Naive thymus-derived CD4-positive, alpha-beta T cell (primary cell): ENCODE measurements at regions of chr12 and their contacts with region 1.

Region 1: DNA sequence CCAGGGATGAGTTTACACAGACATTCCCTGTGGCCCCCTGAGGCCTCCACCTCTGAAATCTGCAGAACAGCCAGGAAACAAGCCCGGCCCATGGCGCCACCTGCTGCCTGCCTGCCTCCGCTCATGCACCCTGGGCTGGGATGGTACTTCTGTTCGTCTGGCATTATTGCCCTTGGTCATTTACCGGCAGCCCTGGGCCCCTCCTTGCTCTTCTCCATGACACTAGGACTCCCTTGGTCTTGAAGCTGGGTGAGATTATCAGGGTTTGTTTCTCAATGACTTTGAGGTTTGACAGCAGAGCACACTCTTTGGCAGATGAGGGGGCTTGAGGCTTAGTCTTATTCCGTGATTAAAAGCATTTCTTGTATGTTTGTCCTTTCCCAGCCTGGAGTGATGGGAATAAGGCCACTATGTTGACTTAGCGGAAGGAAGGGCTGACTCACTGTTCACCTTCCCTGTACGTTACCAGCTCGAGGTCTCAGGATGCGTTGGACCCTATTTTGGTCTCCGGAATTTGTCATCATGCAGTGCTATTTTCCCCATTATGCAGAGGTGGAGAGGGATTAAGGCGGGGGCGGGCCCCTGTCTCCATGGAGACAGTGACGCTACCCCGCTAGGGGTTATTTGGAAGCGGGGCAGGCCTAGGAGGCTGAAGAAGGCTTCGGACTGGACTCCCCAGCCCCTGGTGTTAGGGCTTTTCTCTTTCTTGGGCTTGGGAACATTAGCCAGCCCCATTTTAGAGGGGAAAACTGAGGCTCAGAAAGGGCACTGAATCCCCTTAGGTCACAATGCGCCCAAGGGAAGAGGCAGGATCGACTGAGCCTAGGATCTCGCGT is 706 bp upstream of the PEX5 start:
- DNase-seq: peak; percentile 34 to 64 (median 58)
- ATAC-seq: peak; percentile 40
- H3K4me3 ChIP-seq: peak overlapping the region; percentile 89
- H3K4me3 Mint-ChIP-seq: peak overlapping the region; percentile 92 to 99 (median 97)
- H3K27ac ChIP-seq: peak overlapping the region; percentile 92
- H3K27ac Mint-ChIP-seq: peak overlapping the region; percentile 93 to 99 (median 98)
- H3K4me1 ChIP-seq: peaks cover 10 to 28% of the 10 kb centered on the region in 2 donors
- H3K4me1 Mint-ChIP-seq: peaks cover 18 to 48% (median 40%) of the 10 kb centered on the region in 7 donors
- H3K27me3 ChIP-seq: no peaks in the 10 kb centered on the region
- H3K27me3 Mint-ChIP-seq: no peaks in the 10 kb centered on the region

Region 2: DNA sequence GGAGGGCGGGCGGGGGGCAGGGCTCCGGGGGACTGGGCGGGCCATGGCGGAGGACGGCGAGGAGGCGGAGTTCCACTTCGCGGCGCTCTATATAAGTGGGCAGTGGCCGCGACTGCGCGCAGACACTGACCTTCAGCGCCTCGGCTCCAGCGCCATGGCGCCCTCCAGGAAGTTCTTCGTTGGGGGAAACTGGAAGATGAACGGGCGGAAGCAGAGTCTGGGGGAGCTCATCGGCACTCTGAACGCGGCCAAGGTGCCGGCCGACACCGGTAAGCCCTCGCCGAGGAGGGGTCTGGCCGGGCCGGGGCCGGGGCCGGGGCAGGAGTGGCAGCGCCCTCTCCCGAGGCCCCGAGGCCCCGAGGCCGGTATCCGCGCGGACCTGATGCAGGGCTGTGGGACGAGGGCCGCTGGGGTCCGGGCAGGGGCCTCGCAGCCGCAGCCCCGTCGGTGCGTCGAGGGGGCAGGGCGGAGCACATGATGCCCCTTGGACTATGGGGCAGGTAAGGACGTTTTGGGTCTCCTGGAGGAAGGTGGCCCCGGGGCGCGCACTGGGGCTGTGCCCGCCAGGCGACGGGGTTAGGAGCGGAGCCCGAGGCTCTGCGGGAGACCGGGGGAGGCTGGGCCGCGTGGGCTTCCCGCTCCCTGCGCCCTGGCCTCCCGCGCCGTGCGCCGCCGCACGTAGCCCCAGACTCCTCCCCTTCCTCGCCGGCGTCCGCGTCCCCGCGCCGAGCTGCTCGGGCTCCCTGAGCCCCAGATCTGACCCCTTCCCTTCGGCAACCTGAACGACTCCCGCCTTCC is 321.2 kb before region 1 on chr12 and contains the start of gene TPI1:
- CTCF ChIA-PET with region 1: no interaction called
- POLR2A ChIA-PET with region 1: interaction called, 5 read pairs
- intact Hi-C with region 1: loop called in 1 of 2 experiments (anchors 1 kb)
- DNase-seq: peak; percentile 40 to 87 (median 52)
- ATAC-seq: peak; percentile 88
- H3K4me3 ChIP-seq: peak within 1 kb of the TSS; percentile 61
- H3K4me3 Mint-ChIP-seq: peak within 1 kb of the TSS; percentile 87 to 93 (median 91)
- H3K27ac ChIP-seq: peak within 1 kb of the TSS; percentile 82
- H3K27ac Mint-ChIP-seq: peak within 1 kb of the TSS; percentile 76 to 95 (median 87)
- H3K4me1 ChIP-seq: peaks cover 38 to 39% of the 10 kb centered on the region in 2 donors
- H3K4me1 Mint-ChIP-seq: peaks cover 34 to 55% (median 44%) of the 10 kb centered on the region in 7 donors
- H3K27me3 ChIP-seq: no peaks in the 10 kb centered on the region
- H3K27me3 Mint-ChIP-seq: no peaks in the 10 kb centered on the region
- total RNA-seq, gene TPI1: 89.7 to 1,293 (median 134) TPM

Region 3: DNA sequence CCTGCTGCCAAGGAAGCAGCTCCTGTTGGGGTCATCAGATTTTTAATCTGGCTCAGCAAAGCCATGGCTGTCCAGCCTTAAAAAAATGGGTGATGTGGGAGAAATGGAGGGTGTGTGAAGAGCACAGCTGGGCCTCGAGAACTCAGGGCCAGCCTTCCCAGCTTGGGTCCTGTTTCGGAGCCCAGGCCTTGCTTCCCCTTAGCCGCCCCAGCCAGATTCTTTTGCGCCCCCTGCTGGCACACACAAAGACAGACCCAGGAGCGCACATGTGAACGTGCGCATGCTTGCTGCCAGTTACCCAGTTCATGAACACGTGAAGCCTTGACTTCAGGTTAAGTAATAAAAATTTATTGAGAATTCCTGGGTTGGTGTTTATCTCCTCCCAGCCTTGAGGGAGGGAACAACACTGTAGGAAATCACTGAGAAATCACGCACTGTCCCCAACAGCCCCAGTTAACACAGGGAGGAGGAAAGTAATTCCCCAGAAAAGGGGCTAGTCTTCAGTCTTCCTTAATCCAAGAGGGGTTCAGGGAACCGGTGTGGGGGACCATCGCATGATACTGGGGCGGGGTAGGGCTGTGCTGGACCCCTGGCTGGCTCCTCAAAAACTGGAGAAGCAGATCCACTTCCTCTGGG is 223.6 kb before region 1 on chr12:
- CTCF ChIA-PET with region 1: no interaction called
- POLR2A ChIA-PET with region 1: no interaction called
- intact Hi-C with region 1: loop called in 1 of 2 experiments (anchors 2 kb)
- DNase-seq: peak; percentile 77 to 89 (median 85)
- ATAC-seq: peak; percentile 69
- H3K4me3 ChIP-seq: no peak overlapping the region
- H3K4me3 Mint-ChIP-seq: peak overlapping the region in 3 of 10 donors; percentile 9 to 23 (median 17)
- H3K27ac ChIP-seq: peak overlapping the region; percentile 68
- H3K27ac Mint-ChIP-seq: peak overlapping the region; percentile 75 to 95 (median 87)
- H3K4me1 ChIP-seq: peaks cover 45 to 60% of the 10 kb centered on the region in 2 donors
- H3K4me1 Mint-ChIP-seq: peaks cover 33 to 59% (median 56%) of the 10 kb centered on the region in 7 donors
- H3K27me3 ChIP-seq: no peaks in the 10 kb centered on the region
- H3K27me3 Mint-ChIP-seq: no peaks in the 10 kb centered on the region

Region 4: GRCh38 chr12:7092229-7092985 is 96.4 kb before region 1 on chr12 and contains the start of gene C1R:
- CTCF ChIA-PET with region 1: no interaction called
- POLR2A ChIA-PET with region 1: no interaction called
- intact Hi-C with region 1: no loop called
- DNase-seq: peak; percentile 46 to 71 (median 64)
- ATAC-seq: peak; percentile 81
- H3K4me3 ChIP-seq: peak within 1 kb of the TSS; percentile 66
- H3K4me3 Mint-ChIP-seq: peak within 1 kb of the TSS; percentile 76 to 91 (median 86)
- H3K27ac ChIP-seq: peak within 1 kb of the TSS; percentile 44
- H3K27ac Mint-ChIP-seq: peak within 1 kb of the TSS in 8 of 9 donors; percentile 65 to 94 (median 78)
- H3K4me1 ChIP-seq: peaks cover 7 to 8% of the 10 kb centered on the region in 2 donors
- H3K4me1 Mint-ChIP-seq: peaks cover 0 to 14% (median 9%) of the 10 kb centered on the region in 7 donors
- H3K27me3 ChIP-seq: no peaks in the 10 kb centered on the region
- H3K27me3 Mint-ChIP-seq: no peaks in the 10 kb centered on the region
- total RNA-seq, gene C1R: 1.6 to 7.2 (median 4.8) TPM

Region 5: GRCh38 chr12:7129872-7130680 is 58.7 kb before region 1 on chr12 and contains the start of gene CLSTN3:
- CTCF ChIA-PET with region 1: no interaction called
- POLR2A ChIA-PET with region 1: no interaction called
- intact Hi-C with region 1: loop called in 1 of 2 experiments (anchors 1 kb)
- DNase-seq: peak; percentile 70 to 88 (median 83)
- ATAC-seq: peak; percentile 93
- H3K4me3 ChIP-seq: peak within 1 kb of the TSS; percentile 88
- H3K4me3 Mint-ChIP-seq: peak within 1 kb of the TSS; percentile 94 to 100 (median 96)
- H3K27ac ChIP-seq: peak within 1 kb of the TSS; percentile 73
- H3K27ac Mint-ChIP-seq: peak within 1 kb of the TSS; percentile 73 to 95 (median 92)
- H3K4me1 ChIP-seq: peaks cover 18% of the 10 kb centered on the region in 2 donors
- H3K4me1 Mint-ChIP-seq: peaks cover 29 to 41% (median 34%) of the 10 kb centered on the region in 7 donors
- H3K27me3 ChIP-seq: no peaks in the 10 kb centered on the region
- H3K27me3 Mint-ChIP-seq: no peaks in the 10 kb centered on the region
- total RNA-seq, gene CLSTN3: 20.2 to 76.3 (median 38.7) TPM

Region 6: DNA sequence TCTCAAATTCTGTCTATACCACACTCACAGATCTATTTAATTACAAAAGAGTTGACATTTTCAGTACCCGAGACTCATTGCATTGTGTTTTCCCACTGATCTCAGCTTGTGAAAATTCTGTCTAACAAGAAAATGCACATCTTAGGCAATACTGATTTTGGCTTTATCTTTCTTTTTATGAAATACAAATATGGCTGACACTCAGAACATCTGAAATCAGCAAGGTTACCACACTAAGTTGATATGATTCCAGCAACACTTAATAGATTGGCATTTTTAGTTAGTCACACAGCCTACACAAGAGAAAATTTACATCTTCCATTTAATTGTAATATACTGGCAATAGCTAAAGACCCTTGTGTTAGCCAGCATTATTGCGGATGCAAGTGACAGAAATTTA is 41.0 kb after region 1 on chr12:
- CTCF ChIA-PET with region 1: no interaction called
- POLR2A ChIA-PET with region 1: no interaction called
- intact Hi-C with region 1: no loop called
- DNase-seq: no peak
- ATAC-seq: no peak
- H3K4me3 ChIP-seq: no peak overlapping the region
- H3K4me3 Mint-ChIP-seq: no peak overlapping the region
- H3K27ac ChIP-seq: no peak overlapping the region
- H3K27ac Mint-ChIP-seq: no peak overlapping the region
- H3K4me1 ChIP-seq: no peaks in the 10 kb centered on the region
- H3K4me1 Mint-ChIP-seq: no peaks in the 10 kb centered on the region
- H3K27me3 ChIP-seq: no peaks in the 10 kb centered on the region
- H3K27me3 Mint-ChIP-seq: peaks cover 21 to 35% (median 33%) of the 10 kb centered on the region in 5 donors

Region 7: DNA sequence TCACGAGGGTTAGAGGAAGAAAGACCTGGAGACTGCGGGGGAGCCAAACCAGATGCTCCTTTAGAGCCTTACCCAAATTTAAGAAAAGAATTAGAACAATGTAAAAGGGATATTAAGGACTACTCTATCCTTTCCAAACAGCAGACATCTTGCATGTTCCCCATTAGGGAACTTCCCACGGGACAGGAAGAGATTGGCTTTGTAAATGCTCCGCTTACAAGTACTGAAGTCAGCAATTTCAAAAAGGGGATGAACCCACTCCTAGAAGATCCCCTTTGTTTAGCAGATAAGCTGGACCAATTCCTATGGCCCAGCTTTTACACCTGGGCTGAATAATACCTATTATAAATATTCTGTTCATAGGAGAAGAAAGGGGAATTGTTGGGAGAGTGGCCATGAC is 402.8 kb after region 1 on chr12:
- CTCF ChIA-PET with region 1: no interaction called
- POLR2A ChIA-PET with region 1: no interaction called
- intact Hi-C with region 1: no loop called
- DNase-seq: no peak
- ATAC-seq: no peak
- H3K4me3 ChIP-seq: no peak overlapping the region
- H3K4me3 Mint-ChIP-seq: no peak overlapping the region
- H3K27ac ChIP-seq: no peak overlapping the region
- H3K27ac Mint-ChIP-seq: no peak overlapping the region
- H3K4me1 ChIP-seq: no peaks in the 10 kb centered on the region
- H3K4me1 Mint-ChIP-seq: peaks cover 0 to 8% (median 4%) of the 10 kb centered on the region in 7 donors
- H3K27me3 ChIP-seq: no peaks in the 10 kb centered on the region
- H3K27me3 Mint-ChIP-seq: peaks cover 6 to 32% (median 13%) of the 10 kb centered on the region in 5 donors

Region 8: GRCh38 chr12:7638760-7639555 is 450.2 kb after region 1 on chr12:
- CTCF ChIA-PET with region 1: no interaction called
- POLR2A ChIA-PET with region 1: interaction called, 3 read pairs
- intact Hi-C with region 1: loop called in 1 of 2 experiments (anchors 1 kb)
- DNase-seq: peak; percentile 39 to 87 (median 85)
- ATAC-seq: peak; percentile 91
- H3K4me3 ChIP-seq: peak overlapping the region; percentile 34
- H3K4me3 Mint-ChIP-seq: peak overlapping the region; percentile 46 to 88 (median 74)
- H3K27ac ChIP-seq: peak overlapping the region; percentile 37
- H3K27ac Mint-ChIP-seq: peak overlapping the region; percentile 43 to 93 (median 80)
- H3K4me1 ChIP-seq: peaks cover 9 to 10% of the 10 kb centered on the region in 2 donors
- H3K4me1 Mint-ChIP-seq: peaks cover 10 to 47% (median 40%) of the 10 kb centered on the region in 7 donors
- H3K27me3 ChIP-seq: no peaks in the 10 kb centered on the region
- H3K27me3 Mint-ChIP-seq: peaks cover under 1 to 20% (median 7%) of the 10 kb centered on the region in 5 donors

Region 9: DNA sequence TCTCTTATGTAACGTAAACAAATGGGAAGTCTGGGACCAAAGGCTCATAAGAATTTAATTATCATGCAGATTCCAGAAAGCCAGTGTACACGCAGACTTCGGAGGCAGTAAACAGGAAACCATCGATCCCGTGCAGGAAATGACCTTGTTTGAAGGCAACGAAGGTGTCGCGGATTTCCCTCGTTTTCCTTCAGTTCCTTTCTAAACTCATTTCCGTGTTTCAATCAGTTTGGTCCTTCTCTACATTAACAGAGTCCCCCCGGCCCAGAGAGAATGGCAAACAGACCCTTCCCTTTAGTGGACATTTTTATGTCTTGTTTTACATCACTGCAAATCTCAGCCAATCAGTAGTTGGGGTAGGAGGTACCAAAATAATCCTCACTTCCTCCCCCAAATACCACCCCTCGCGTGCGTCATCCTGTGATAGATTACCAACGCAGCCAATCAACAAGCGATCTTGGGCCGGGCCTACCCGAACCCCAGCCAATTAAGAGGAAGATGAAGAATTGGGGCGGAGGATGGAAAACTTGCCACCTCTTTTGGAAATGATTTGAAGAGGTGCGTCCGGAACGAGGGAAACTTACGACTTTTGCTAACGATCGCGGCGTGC is 837.6 kb after region 1 on chr12:
- CTCF ChIA-PET with region 1: no interaction called
- POLR2A ChIA-PET with region 1: no interaction called
- intact Hi-C with region 1: loop called in 1 of 2 experiments (anchors 2 kb)
- DNase-seq: peak; percentile 74 to 99 (median 98)
- ATAC-seq: peak; percentile 96
- H3K4me3 ChIP-seq: peak overlapping the region; percentile 79
- H3K4me3 Mint-ChIP-seq: peak overlapping the region; percentile 89 to 100 (median 96)
- H3K27ac ChIP-seq: peak overlapping the region; percentile 99
- H3K27ac Mint-ChIP-seq: peak overlapping the region; percentile 96 to 100 (median 99)
- H3K4me1 ChIP-seq: peaks cover 5 to 8% of the 10 kb centered on the region in 2 donors
- H3K4me1 Mint-ChIP-seq: peaks cover 5 to 36% (median 13%) of the 10 kb centered on the region in 7 donors
- H3K27me3 ChIP-seq: no peaks in the 10 kb centered on the region
- H3K27me3 Mint-ChIP-seq: peaks cover 0 to 2% (median 0%) of the 10 kb centered on the region in 5 donors

Region 10: GRCh38 chr12:8697476-8698131 is 1508.8 kb after region 1 on chr12 and contains the start of gene RIMKLB:
- CTCF ChIA-PET with region 1: no interaction called
- POLR2A ChIA-PET with region 1: no interaction called
- intact Hi-C with region 1: loop called in 1 of 2 experiments (anchors 5 kb)
- DNase-seq: peak; percentile 59 to 75 (median 72)
- ATAC-seq: peak; percentile 93
- H3K4me3 ChIP-seq: peak within 1 kb of the TSS; percentile 79
- H3K4me3 Mint-ChIP-seq: peak within 1 kb of the TSS; percentile 89 to 95 (median 93)
- H3K27ac ChIP-seq: peak within 1 kb of the TSS; percentile 79
- H3K27ac Mint-ChIP-seq: peak within 1 kb of the TSS; percentile 65 to 94 (median 90)
- H3K4me1 ChIP-seq: peaks cover 0 to 17% of the 10 kb centered on the region in 2 donors
- H3K4me1 Mint-ChIP-seq: peaks cover 11 to 44% (median 42%) of the 10 kb centered on the region in 7 donors
- H3K27me3 ChIP-seq: no peaks in the 10 kb centered on the region
- H3K27me3 Mint-ChIP-seq: peaks cover 0 to 64% (median 0%) of the 10 kb centered on the region in 5 donors
- total RNA-seq, gene RIMKLB: 1.8 to 31.3 (median 18.2) TPM